Activated T-helper 2 cell treated with anti-CD3 and anti-CD28 coated beads, Interferon-gamma antibody, Interleukin-2, Interleukin-4, amounts not matched to agents 10 μg/mL and 5 μg/mL and 100 μg/mL, durations not matched to agents 14 hours and 24 hours and 36 hours (primary cell): ENCODE measurements at regions of chr16 and their contacts with region 1.

Region 1: DNA sequence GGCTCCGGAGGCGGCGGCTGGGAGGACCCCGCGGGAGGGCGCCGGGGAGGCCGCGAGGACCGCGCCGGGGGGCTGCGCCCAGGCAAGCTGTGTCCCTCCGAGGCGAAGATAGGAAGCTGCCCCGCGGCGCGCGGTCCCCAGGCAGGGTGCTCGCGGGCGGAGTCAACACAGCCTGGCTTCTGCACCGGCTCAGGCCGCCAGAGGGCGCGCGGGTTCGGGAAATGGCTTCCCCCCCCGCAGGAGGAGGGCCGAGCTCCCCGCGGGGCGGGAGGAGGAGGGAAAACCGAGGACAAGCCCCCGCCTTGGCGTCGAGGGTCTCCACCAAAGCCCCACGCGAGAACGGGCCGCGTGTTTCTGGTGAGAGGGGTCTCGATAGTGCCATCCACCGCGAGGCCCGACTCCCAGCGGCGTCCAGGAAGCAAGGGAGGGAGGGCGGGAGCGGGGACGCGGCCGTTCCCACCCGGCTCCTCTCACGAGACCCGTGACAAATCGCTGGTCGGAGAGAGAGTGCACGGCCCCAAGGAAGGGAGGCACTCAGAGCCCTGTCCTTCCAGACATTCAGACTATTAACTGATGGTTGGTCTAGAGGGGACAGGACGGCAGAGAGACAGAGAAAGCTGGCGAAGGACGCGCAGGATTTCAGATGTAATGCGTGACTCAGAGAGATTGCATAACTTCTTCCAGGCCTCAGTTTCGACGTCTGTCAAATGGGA is 64.4 kb upstream of the DNAJA2 start:
- DNase-seq: peak; percentile 82
- H3K4me3 Mint-ChIP-seq: peak overlapping the region; percentile 47
- H3K27ac Mint-ChIP-seq: no peak overlapping the region
- H3K4me1 Mint-ChIP-seq: peaks cover 4% of the 10 kb centered on the region
- H3K27me3 Mint-ChIP-seq: peaks cover 34% of the 10 kb centered on the region

Region 2: GRCh38 chr16:46973207-46973995 is 64.5 kb before region 1 on chr16 and contains the start of gene DNAJA2:
- intact Hi-C with region 1: loop called (anchors 2 kb)
- DNase-seq: peak; percentile 87
- H3K4me3 Mint-ChIP-seq: peak within 1 kb of the TSS; percentile 98
- H3K27ac Mint-ChIP-seq: peak within 1 kb of the TSS; percentile 96
- H3K4me1 Mint-ChIP-seq: peaks cover 45% of the 10 kb centered on the region
- H3K27me3 Mint-ChIP-seq: no peaks in the 10 kb centered on the region
- total RNA-seq, gene DNAJA2: 65.9 and 74.4 TPM in 2 replicates

Region 3: DNA sequence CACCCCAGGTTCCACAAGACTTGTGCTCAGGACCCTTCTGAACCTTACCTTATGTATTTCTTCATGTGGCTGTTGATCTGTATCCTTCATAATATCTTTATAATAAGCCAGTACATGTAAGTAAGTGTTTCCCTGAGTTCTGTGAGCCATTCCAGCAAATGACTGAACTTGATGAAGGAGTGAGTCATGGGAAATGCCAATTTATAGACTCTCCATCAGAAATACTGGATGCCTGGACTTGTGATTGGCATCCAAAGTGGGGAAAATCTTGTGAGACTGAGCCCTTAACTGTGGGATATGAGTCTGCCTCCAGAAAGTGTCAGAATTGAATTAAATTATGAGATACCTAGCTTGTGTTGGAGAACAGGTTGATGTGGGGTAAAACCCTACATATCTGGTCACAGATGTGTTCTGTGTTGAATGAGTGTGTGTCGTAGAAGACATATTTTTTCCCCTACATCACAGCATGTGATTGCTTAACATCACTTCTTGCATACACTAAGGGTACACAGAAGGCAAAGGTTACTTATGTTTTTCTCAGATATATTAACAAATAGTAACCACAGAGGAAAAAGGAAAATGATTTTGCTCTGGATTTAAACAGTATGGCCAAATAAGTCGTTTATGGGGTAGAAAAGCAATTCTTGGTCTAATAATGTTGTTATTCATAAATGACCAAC is 176.0 kb after region 1 on chr16:
- intact Hi-C with region 1: no loop called
- DNase-seq: no peak
- H3K4me3 Mint-ChIP-seq: no peak overlapping the region
- H3K27ac Mint-ChIP-seq: no peak overlapping the region
- H3K4me1 Mint-ChIP-seq: no peaks in the 10 kb centered on the region
- H3K27me3 Mint-ChIP-seq: no peaks in the 10 kb centered on the region

Region 4: GRCh38 chr16:47460711-47461597 is 423.1 kb after region 1 on chr16 and contains the starts of genes ITFG1 and PHKB:
- intact Hi-C with region 1: loop called (anchors 1 kb)
- DNase-seq: peak; percentile 95
- H3K4me3 Mint-ChIP-seq: peak within 1 kb of the TSS; percentile 98
- H3K27ac Mint-ChIP-seq: peak within 1 kb of the TSS; percentile 94
- H3K4me1 Mint-ChIP-seq: peaks cover 36% of the 10 kb centered on the region
- H3K27me3 Mint-ChIP-seq: no peaks in the 10 kb centered on the region
- total RNA-seq, gene ITFG1: 23.9 and 28.7 TPM in 2 replicates
- total RNA-seq, gene PHKB: 29.7 and 34.6 TPM in 2 replicates

Region 5: GRCh38 chr16:48054881-48055601 is 1017.1 kb after region 1 on chr16:
- intact Hi-C with region 1: loop called (anchors 5 kb)
- DNase-seq: no peak
- H3K4me3 Mint-ChIP-seq: no peak overlapping the region
- H3K27ac Mint-ChIP-seq: no peak overlapping the region
- H3K4me1 Mint-ChIP-seq: peaks cover 2% of the 10 kb centered on the region
- H3K27me3 Mint-ChIP-seq: peaks cover 18% of the 10 kb centered on the region

Region 6: GRCh38 chr16:48164907-48165726 is 1127.2 kb after region 1 on chr16:
- intact Hi-C with region 1: loop called (anchors 2 kb)
- DNase-seq: peak; percentile 46
- H3K4me3 Mint-ChIP-seq: no peak overlapping the region
- H3K27ac Mint-ChIP-seq: no peak overlapping the region
- H3K4me1 Mint-ChIP-seq: peaks cover 4% of the 10 kb centered on the region
- H3K27me3 Mint-ChIP-seq: peaks cover 21% of the 10 kb centered on the region